AG04450 (cell line): ENCODE measurements at regions of chr12 and their contacts with region 1.

Region 1: DNA sequence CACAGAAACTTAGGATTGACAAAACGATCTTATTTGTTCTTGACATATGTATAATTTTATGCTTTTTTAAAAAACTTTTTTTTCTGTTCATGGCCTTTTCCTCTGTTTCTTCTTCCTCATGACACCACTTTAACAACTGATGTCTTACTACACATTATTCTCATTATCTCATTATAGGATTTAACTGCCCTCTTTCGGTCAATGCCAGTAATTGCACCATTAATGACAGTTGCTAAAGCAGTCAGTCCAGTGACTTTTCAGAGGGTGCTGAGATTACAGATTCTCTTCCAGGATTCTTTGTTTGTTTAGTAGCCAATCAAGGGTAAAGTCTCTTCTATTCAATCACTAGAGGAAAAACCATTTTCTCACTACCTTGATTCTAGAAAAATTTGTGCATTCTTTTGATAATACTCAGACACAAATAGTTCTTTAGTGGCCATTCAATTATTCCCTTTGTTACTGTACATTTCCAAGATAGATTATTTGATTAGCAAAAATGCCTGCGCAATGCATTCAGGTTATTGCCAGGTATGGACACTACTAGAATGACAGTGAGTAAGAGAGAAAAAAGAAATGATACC is 50.1 kb downstream of the KLRG1 start:
- DNase-seq: peak; percentile 4
- H3K4me3 ChIP-seq: no peak overlapping the region
- H3K27ac ChIP-seq: no peak overlapping the region
- H3K27me3 ChIP-seq: no peaks in the 10 kb centered on the region
- CTCF ChIP-seq: peak; percentile 75

Region 2: DNA sequence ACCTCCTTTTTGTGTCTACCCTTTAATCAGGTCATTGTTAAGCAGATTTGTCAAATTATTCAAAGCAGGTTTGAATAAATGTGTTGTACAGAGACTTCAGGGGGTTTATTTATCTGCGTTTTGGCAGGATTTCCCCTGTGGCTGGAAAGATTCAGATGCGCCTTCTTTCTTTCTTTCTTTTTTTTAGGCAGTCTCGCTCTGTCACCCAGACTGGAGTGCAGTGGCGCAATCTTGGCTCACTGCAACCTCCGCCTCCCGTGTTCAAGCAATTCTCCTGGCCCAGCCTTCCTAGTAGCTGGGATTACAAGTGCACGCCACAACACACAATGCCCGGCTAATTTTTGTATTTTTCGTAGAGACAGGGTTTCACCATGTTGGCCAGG is 1280.7 kb before region 1 on chr12:
- CTCF ChIA-PET with region 1: interaction called, 12 read pairs
- POLR2A ChIA-PET with region 1: no interaction called
- DNase-seq: no peak
- H3K4me3 ChIP-seq: no peak overlapping the region
- H3K27ac ChIP-seq: no peak overlapping the region
- H3K27me3 ChIP-seq: no peaks in the 10 kb centered on the region
- CTCF ChIP-seq: no peak

Region 3: GRCh38 chr12:8949342-8950220 is 89.9 kb before region 1 on chr12 and contains the start of gene M6PR:
- CTCF ChIA-PET with region 1: interaction called, 23 read pairs
- POLR2A ChIA-PET with region 1: no interaction called
- DNase-seq: peak; percentile 78
- H3K4me3 ChIP-seq: peak within 1 kb of the TSS; percentile 92
- H3K27ac ChIP-seq: peak within 1 kb of the TSS; percentile 99
- H3K27me3 ChIP-seq: no peaks in the 10 kb centered on the region
- CTCF ChIP-seq: peak; percentile 60
- polyA plus RNA-seq, gene M6PR: 106 and 119 TPM in 2 replicates

Region 4: GRCh38 chr12:9049520-9050133 is 10.1 kb after region 1 on chr12:
- CTCF ChIA-PET with region 1: interaction called, 34 read pairs
- POLR2A ChIA-PET with region 1: no interaction called
- DNase-seq: peak; percentile 11
- H3K4me3 ChIP-seq: no peak overlapping the region
- H3K27ac ChIP-seq: no peak overlapping the region
- H3K27me3 ChIP-seq: no peaks in the 10 kb centered on the region
- CTCF ChIP-seq: peak; percentile 54